ENCODE measurements at regions of chr1 and their contacts with region 1.

Region 1: DNA sequence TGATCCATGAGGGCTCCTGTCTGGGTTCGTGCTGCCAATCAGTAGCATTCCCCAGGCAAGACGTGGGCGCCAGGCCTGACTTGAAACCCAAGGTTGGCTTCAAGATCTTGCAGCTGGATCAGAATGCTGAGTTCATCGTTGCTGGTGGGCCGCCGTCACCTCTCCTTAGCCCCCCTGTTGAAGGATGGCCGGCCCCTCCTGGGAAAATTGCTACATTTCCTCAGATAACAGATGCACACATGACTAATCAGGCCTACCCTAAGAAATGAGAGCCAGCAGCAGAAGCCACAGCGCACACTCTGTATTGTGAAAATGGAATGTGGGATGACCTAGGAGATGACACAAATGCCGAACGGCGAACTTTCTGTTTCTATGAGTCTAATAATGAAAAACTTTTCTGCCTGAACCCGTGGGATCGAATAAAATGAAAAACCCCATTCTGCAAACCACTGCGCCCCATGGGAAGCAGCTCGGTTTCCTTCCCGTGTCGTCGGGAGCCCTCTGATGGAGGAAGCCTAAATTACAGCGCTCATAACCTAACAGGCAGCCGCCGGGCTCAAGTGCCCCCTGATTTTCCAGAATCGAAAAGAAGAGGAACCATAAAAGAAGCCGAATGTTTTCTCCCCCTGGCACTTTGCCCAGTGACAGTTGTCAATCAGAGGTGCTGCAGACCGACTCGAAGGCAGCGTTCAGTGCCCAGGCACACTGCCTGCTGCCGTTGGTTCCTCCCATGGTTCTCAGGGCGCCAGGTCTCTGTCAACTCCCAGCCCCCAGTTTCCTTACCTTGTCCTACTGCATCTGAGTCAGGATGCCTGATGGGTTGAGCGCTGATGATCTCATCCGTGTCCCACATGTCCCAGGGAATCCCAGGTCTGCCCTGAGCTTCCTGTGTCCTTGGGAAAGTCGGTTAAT is 38.2 kb upstream of the H6PD start:
- DNase-seq: peak; percentile 82
- H3K4me3 ChIP-seq: peak overlapping the region in 1 of 2 donors; percentile 17
- H3K27ac ChIP-seq: peak overlapping the region; percentile 64 to 79
- H3K4me1 ChIP-seq: peaks cover 32% of the 10 kb centered on the region
- H3K27me3 ChIP-seq: no peaks in the 10 kb centered on the region
- CTCF ChIP-seq: peak in 2 of 3 experiments; percentile 71 to 81
- POLR2A ChIP-seq: no peak

Region 2: DNA sequence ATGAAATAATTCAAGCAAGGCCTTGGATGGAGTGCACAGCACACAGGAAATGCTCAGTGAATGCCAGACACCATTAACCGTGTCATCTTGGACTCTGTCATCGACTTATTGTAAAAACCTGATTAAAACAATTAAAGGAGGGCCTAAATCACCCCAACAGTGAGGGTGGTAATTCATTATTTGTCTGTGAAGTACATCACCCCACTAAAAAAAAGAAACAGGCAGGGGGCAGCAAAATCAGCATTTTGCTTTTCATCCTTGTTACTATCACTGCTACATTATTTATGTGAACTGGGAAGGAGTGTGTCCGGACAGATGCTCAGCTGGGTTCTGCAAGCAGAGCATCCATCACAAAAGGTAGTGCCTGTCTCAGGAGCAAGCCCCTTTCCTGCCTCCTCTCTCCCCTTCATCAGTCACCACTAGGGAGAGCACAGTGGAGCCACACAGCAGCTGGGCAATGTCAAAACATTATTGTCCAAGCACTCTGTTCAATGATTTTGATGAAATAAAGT is 477.5 kb before region 1 on chr1:
- intact Hi-C with region 1: no loop called
- DNase-seq: no peak
- H3K4me3 ChIP-seq: no peak overlapping the region
- H3K27ac ChIP-seq: no peak overlapping the region
- H3K4me1 ChIP-seq: no peaks in the 10 kb centered on the region
- H3K27me3 ChIP-seq: no peaks in the 10 kb centered on the region
- CTCF ChIP-seq: peak in 1 of 3 experiments; percentile 17
- POLR2A ChIP-seq: no peak

Region 3: GRCh38 chr1:9110669-9111356 is 85.6 kb before region 1 on chr1:
- intact Hi-C with region 1: loop called (anchors 5 kb)
- DNase-seq: peak; percentile 96
- H3K4me3 ChIP-seq: no peak overlapping the region
- H3K27ac ChIP-seq: no peak overlapping the region
- H3K4me1 ChIP-seq: peaks cover 11% of the 10 kb centered on the region
- H3K27me3 ChIP-seq: no peaks in the 10 kb centered on the region
- CTCF ChIP-seq: peak; percentile 89 to 95 (median 93)
- POLR2A ChIP-seq: no peak

Region 4: GRCh38 chr1:9529190-9529589 is 332.8 kb after region 1 on chr1:
- intact Hi-C with region 1: no loop called
- DNase-seq: no peak
- H3K4me3 ChIP-seq: no peak overlapping the region
- H3K27ac ChIP-seq: no peak overlapping the region
- H3K4me1 ChIP-seq: peaks cover 3% of the 10 kb centered on the region
- H3K27me3 ChIP-seq: no peaks in the 10 kb centered on the region
- CTCF ChIP-seq: no peak
- POLR2A ChIP-seq: no peak

Measured in testis (tissue), 5 donors.